H1 (cell line): ENCODE measurements at regions of chr22 and their contacts with region 1.

Region 1: DNA sequence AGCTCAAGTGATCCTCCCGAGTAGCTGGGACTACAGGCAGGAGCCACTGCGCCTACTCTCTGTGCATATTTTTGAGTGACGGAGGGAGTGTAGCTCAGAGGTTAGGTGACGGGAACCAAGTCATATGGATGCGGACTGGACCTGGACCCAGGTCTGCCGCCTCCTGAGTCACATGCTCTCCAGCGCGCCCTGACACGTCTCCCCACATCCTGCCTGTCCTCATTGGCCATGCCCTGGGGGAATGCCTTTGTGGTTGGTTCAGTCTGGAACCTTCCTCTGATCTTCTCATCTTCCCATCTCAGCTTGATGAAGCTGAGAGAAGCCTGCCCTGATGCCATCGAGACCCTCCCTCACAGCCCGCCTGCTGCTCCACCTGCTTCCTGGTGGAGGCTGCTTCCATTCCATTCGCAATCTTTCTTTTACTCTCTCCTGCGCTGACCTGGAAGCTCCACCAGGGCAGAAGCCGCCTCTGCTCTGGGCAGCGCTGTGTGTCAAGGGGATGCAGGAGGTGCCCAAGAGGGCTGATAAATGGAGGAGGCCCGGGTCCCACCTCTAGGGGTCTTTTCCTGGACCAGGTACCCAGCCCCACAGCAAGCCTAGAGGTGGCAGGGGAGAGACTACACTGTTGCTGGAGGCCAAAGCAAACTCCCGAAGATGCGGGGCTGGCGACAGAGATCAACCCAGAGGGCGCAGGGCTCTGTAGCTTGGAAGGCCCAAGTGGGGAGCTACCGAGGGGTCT is 13.9 kb upstream of the BAIAP2L2 start:
- DNase-seq: no peak
- H3K4me3 ChIP-seq: no peak overlapping the region
- H3K27ac ChIP-seq: no peak overlapping the region
- H3K4me1 ChIP-seq: peaks cover 0 to 3% (median 0%) of the 10 kb centered on the region in 4 experiments; a peak in 4 of 7 replicates
- H3K27me3 ChIP-seq: no peaks in the 10 kb centered on the region
- CTCF ChIP-seq: peak; percentile 44 to 68 (median 59)
- EP300 ChIP-seq: no peak
- POLR2A ChIP-seq: no peak
- RAD21 ChIP-seq: peak; percentile 17 to 44; a peak in 1 of 4 replicates

Region 2: GRCh38 chr22:38109371-38110001 is 14.9 kb before region 1 on chr22:
- CTCF ChIA-PET with region 1: interaction called, 84 read pairs
- POLR2A ChIA-PET with region 1: interaction called, 3 read pairs
- DNase-seq: no peak
- H3K4me3 ChIP-seq: no peak overlapping the region
- H3K27ac ChIP-seq: no peak overlapping the region
- H3K4me1 ChIP-seq: peaks cover 0 to 9% (median 7%) of the 10 kb centered on the region in 4 experiments; a peak in 3 of 7 replicates
- H3K27me3 ChIP-seq: no peaks in the 10 kb centered on the region
- CTCF ChIP-seq: no peak
- EP300 ChIP-seq: no peak
- POLR2A ChIP-seq: no peak
- RAD21 ChIP-seq: no peak

Region 3: DNA sequence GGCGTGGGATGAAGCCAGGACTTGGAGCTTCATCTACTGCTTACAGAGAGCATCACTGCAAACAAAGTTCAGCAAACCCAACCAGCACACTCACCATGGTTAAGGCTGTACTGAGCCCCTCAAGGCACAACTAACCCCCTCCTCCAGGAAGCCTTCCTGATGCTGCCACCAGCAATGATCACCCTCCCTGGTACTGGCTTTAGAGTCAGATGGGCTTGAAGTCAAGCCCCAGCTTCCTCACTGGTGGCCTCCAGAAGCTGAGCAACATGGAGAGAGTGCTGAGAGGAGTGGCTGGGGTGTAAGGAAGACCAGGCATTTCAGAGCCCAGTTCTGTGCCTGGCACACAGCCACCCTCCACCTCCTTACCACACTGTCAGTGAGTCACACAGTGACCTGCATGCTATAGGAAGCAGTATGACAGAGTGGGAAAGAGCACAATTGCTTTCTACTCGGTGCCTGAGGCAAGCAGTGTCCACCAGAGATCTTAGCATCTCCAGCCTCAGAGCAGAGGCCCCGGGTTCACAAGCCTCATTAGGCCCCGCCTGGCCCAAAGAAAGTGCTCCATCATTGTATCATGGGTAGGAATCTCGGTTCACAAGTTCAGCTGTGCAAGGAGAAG is 10.8 kb after region 1 on chr22:
- CTCF ChIA-PET with region 1: interaction called, 93 read pairs
- POLR2A ChIA-PET with region 1: interaction called, 4 read pairs
- DNase-seq: no peak
- H3K4me3 ChIP-seq: no peak overlapping the region
- H3K27ac ChIP-seq: no peak overlapping the region
- H3K4me1 ChIP-seq: no peaks in the 10 kb centered on the region
- H3K27me3 ChIP-seq: no peaks in the 10 kb centered on the region
- CTCF ChIP-seq: no peak
- EP300 ChIP-seq: no peak
- POLR2A ChIP-seq: no peak
- RAD21 ChIP-seq: no peak

Region 4: DNA sequence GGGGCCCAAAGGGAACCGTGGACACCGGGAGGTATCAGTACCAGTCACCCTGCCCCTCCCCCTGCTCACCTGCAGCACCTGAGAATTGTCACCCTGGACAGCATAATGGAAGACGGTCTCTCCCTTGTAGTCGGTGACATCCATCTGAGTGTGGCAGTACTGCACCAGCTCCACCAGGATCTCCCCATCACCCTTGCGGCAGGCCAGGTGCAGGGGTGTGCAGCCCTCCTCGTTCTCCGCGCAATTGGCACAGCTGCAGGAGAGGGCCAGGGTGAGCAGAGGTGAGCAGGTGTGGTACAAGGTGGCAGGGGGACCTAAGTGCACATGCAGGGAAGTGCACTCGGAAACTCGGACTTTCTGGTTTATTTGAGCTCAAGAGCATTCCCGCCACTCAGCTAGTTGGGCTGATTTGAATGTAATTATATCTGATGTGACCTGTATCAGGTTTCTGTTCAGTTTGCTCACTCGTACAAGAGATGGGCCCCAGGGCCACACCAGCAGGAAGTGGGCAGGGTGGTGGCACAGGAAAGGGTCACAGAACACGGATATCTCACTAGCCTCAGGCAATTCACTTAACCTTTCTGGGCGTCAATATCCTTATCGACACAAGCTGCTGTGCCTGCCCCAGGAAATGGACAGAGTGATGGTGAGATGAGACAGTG is 18.8 kb after region 1 on chr22:
- CTCF ChIA-PET with region 1: interaction called, 93 read pairs
- POLR2A ChIA-PET with region 1: interaction called, 5 read pairs
- DNase-seq: no peak
- H3K4me3 ChIP-seq: no peak overlapping the region
- H3K27ac ChIP-seq: no peak overlapping the region
- H3K4me1 ChIP-seq: peaks cover 0 to 3% (median 0%) of the 10 kb centered on the region in 4 experiments; a peak in 3 of 7 replicates
- H3K27me3 ChIP-seq: no peaks in the 10 kb centered on the region
- CTCF ChIP-seq: no peak
- EP300 ChIP-seq: no peak
- POLR2A ChIP-seq: no peak
- RAD21 ChIP-seq: no peak